Naive thymus-derived CD4-positive, alpha-beta T cell (primary cell): ENCODE measurements at regions of chr2 and their contacts with region 1.

Region 1: GRCh38 chr2:204108330-204108751 is 171.8 kb downstream of the ICOS start:
- DNase-seq: peak in 8 of 9 donors; percentile 40 to 70 (median 56)
- ATAC-seq: peak; percentile 74
- H3K4me3 ChIP-seq: peak overlapping the region; percentile 21
- H3K4me3 Mint-ChIP-seq: peak overlapping the region in 9 of 10 donors; percentile 81 to 88 (median 83)
- H3K27ac ChIP-seq: no peak overlapping the region
- H3K27ac Mint-ChIP-seq: peak overlapping the region in 7 of 9 donors; percentile 7 to 96 (median 48)
- H3K4me1 ChIP-seq: peaks cover 30 to 31% of the 10 kb centered on the region in 2 donors
- H3K4me1 Mint-ChIP-seq: peaks cover 31 to 75% (median 48%) of the 10 kb centered on the region in 7 donors
- H3K27me3 ChIP-seq: no peaks in the 10 kb centered on the region
- H3K27me3 Mint-ChIP-seq: peaks cover 0 to 12% (median 0%) of the 10 kb centered on the region in 5 donors

Region 2: DNA sequence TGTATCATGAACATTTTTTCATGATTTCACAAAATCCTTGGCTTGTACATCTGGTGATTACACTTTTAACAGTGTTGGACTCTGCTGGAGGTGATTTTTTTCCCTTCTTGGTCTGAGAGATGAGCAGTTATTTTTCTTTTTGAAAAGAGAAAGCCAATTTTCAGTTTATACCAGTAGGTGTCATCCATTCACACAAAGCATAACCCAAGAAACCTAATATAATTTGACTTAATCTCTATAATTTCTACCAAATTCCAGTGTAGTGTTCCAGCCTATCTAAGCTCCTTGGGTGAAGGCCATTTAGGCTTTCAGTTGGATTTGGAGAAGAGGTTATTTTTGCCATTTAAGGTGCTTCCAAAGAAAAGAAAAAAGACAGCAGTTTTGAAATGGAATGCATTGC is 179.5 kb before region 1 on chr2:
- CTCF ChIA-PET with region 1: interaction called, 5 read pairs
- POLR2A ChIA-PET with region 1: no interaction called
- intact Hi-C with region 1: loop called in 1 of 2 experiments (anchors 2 kb)
- DNase-seq: peak in 4 of 9 donors; percentile 31 to 50 (median 45)
- ATAC-seq: no peak
- H3K4me3 ChIP-seq: no peak overlapping the region
- H3K4me3 Mint-ChIP-seq: no peak overlapping the region
- H3K27ac ChIP-seq: no peak overlapping the region
- H3K27ac Mint-ChIP-seq: peak overlapping the region in 2 of 9 donors; percentile 2 to 55
- H3K4me1 ChIP-seq: peaks cover 15 to 21% of the 10 kb centered on the region in 2 donors
- H3K4me1 Mint-ChIP-seq: peaks cover 13 to 46% (median 39%) of the 10 kb centered on the region in 7 donors
- H3K27me3 ChIP-seq: no peaks in the 10 kb centered on the region
- H3K27me3 Mint-ChIP-seq: peaks cover 0 to 13% (median 0%) of the 10 kb centered on the region in 5 donors

Region 3: DNA sequence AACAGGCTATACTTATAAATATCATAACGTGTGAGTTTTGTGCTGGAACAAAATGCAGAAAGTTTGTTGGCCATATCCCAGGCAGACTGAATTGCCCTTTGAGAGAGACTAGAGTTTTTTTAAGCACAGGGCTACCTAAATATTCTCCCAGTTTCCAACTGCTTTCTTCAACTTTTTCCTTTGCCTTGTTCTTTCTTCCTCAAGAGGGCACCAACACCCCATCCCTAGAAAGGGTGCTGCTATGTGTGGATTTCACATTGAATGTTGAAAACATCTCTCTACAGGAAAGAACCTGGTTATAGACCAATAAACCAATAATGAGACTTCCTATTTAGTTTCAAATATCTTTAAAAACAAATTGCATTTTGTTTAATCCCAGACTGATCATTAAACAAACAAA is 83.8 kb before region 1 on chr2:
- CTCF ChIA-PET with region 1: no interaction called
- POLR2A ChIA-PET with region 1: no interaction called
- intact Hi-C with region 1: loop called in 1 of 2 experiments (anchors 5 kb)
- DNase-seq: no peak
- ATAC-seq: no peak
- H3K4me3 ChIP-seq: no peak overlapping the region
- H3K4me3 Mint-ChIP-seq: no peak overlapping the region
- H3K27ac ChIP-seq: no peak overlapping the region
- H3K27ac Mint-ChIP-seq: peak overlapping the region in 1 of 9 donors; percentile 28
- H3K4me1 ChIP-seq: peaks cover 0 to 7% of the 10 kb centered on the region in 2 donors
- H3K4me1 Mint-ChIP-seq: peaks cover 0 to 56% (median 20%) of the 10 kb centered on the region in 7 donors
- H3K27me3 ChIP-seq: no peaks in the 10 kb centered on the region
- H3K27me3 Mint-ChIP-seq: no peaks in the 10 kb centered on the region

Region 4: GRCh38 chr2:204260162-204260877 is 152.0 kb after region 1 on chr2:
- CTCF ChIA-PET with region 1: interaction called, 8 read pairs
- POLR2A ChIA-PET with region 1: no interaction called
- intact Hi-C with region 1: loop called in 1 of 2 experiments (anchors 1 kb)
- DNase-seq: peak in 6 of 9 donors; percentile 30 to 47 (median 36)
- ATAC-seq: peak; percentile 60
- H3K4me3 ChIP-seq: no peak overlapping the region
- H3K4me3 Mint-ChIP-seq: no peak overlapping the region
- H3K27ac ChIP-seq: no peak overlapping the region
- H3K27ac Mint-ChIP-seq: no peak overlapping the region
- H3K4me1 ChIP-seq: no peaks in the 10 kb centered on the region
- H3K4me1 Mint-ChIP-seq: peaks cover 0 to 2% (median 0%) of the 10 kb centered on the region in 7 donors
- H3K27me3 ChIP-seq: peaks cover 2 to 3% of the 10 kb centered on the region in 2 donors
- H3K27me3 Mint-ChIP-seq: peaks cover 20 to 58% (median 26%) of the 10 kb centered on the region in 5 donors

Region 5: DNA sequence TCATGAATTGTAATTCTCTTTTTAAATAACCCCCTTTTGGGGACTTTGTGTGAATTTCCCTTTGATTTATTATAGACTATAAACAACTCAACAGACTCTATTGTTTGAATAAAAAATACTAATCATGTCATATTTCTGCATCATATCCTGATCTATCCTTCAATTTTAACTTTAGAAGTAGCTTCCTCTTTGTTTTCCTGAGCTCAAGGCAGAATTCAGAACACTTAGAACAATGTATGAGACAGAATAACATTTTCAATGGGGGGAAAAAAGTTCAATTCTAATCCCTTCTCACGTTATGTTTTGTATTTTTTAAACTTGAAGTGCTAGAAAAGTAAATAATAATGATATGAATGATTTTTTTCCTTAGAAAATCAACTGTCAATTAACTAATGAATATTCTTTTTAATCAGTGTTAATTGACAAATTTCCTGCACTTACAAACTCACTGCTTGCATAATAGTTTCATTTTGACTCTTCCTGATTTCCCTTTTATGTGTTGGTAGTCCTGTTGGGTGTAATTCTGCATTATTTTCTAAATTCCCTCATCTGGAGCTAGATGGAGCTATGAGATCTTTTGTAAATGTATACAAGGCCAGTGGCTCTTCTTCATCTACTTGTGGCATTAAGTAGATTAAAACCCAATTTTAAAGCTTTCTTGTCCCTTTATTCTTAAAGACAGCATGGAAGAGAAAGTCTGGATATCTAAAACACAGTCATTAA is 763.1 kb after region 1 on chr2:
- CTCF ChIA-PET with region 1: no interaction called
- POLR2A ChIA-PET with region 1: no interaction called
- intact Hi-C with region 1: loop called in 1 of 2 experiments (anchors 1 kb)
- DNase-seq: peak in 6 of 9 donors; percentile 30 to 66 (median 53)
- ATAC-seq: peak; percentile 61
- H3K4me3 ChIP-seq: no peak overlapping the region
- H3K4me3 Mint-ChIP-seq: peak overlapping the region in 5 of 10 donors; percentile 0 to 19 (median 1)
- H3K27ac ChIP-seq: no peak overlapping the region
- H3K27ac Mint-ChIP-seq: peak overlapping the region in 7 of 9 donors; percentile 0 to 44 (median 12)
- H3K4me1 ChIP-seq: peaks cover 0 to 27% of the 10 kb centered on the region in 2 donors
- H3K4me1 Mint-ChIP-seq: peaks cover 15 to 57% (median 44%) of the 10 kb centered on the region in 7 donors
- H3K27me3 ChIP-seq: no peaks in the 10 kb centered on the region
- H3K27me3 Mint-ChIP-seq: peaks cover 0 to 18% (median 0%) of the 10 kb centered on the region in 5 donors

Region 6: DNA sequence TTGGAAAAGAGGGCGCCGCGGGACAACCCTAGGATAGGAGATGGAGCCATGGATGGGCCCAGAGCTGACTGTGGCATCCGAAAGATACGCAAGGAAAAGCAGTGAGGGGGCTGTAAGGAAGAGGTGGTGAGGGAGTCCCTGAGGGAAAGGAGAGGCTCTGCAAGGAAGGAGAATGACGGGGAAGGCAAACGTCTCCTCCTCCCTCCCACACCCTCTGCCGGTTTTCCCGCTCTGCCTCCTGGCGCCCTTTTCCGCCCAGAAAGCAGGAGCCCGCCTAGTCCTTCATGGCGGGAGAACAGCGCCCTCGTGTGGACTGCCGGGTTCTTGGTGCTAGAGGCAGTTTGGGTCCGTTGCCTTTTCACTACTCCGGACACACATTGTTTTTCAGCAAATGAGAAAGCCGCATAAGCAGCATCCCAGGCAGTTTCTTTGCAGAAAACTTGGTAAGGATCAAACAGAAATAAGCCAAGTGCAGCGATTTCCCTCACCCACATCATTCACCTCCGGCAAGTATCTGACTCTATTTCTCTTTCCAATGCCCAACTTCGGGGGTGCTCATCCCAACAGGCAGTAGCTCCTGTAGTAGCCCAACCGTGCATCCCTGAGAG is 1777.3 kb after region 1 on chr2:
- CTCF ChIA-PET with region 1: no interaction called
- POLR2A ChIA-PET with region 1: no interaction called
- intact Hi-C with region 1: loop called in 1 of 2 experiments (anchors 5 kb)
- DNase-seq: peak in 8 of 9 donors; percentile 6 to 76 (median 30)
- ATAC-seq: no peak
- H3K4me3 ChIP-seq: no peak overlapping the region
- H3K4me3 Mint-ChIP-seq: no peak overlapping the region
- H3K27ac ChIP-seq: no peak overlapping the region
- H3K27ac Mint-ChIP-seq: no peak overlapping the region
- H3K4me1 ChIP-seq: no peaks in the 10 kb centered on the region
- H3K4me1 Mint-ChIP-seq: peaks cover 0 to 6% (median 0%) of the 10 kb centered on the region in 7 donors
- H3K27me3 ChIP-seq: no peaks in the 10 kb centered on the region
- H3K27me3 Mint-ChIP-seq: peaks cover 14 to 40% (median 24%) of the 10 kb centered on the region in 5 donors